ENCODE measurements at regions of chr17 and their contacts with region 1.

Region 1: DNA sequence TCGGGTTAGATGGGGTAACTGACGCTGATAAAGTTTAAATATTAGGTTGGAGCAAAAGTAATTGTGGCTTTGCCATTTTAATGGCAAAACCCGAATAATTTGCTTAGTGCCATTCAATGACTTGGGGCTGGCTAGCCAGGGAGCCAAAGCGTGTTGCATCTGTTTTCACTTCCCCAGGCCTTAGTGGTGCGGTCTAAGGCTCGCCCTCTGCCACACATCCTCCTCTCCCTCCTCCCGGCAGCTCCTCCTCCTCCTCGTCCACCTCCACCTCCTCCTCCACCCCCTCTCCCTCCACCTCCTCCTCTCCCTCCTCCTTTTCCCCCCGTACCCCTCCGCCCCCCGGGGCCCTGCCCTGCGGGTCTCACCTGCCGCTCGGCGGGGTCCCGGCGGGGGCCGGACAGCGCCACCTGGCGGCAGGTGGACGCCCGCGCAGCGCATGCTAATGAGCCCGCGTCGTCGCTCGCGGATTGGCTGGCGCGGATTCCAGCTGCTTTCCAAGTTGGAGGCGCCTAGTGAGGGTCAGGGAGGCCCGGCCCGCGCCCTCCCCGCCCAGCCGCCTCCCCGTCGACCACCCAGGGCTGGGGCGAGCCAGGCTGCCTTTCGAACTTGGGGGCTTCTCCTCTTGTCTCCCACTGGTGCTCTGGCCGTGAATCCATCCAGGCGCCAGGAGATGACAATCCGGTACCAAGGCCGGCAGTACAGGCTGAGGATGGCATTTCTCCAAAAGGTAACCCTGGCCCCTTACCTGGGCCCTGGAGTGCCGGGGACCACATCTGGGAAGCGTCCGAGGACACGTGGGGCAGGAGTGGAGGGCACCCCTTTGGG is 36.6 kb upstream of the RGS9 start:
- DNase-seq: peak; percentile 67 to 92 (median 77)
- ATAC-seq: peak; percentile 87
- H3K4me3 ChIP-seq: peak overlapping the region; percentile 68
- H3K4me3 Mint-ChIP-seq: peak overlapping the region; percentile 88
- H3K27ac ChIP-seq: peak overlapping the region in 1 of 2 donors; percentile 56
- H3K27ac Mint-ChIP-seq: peak overlapping the region; percentile 89
- H3K4me1 ChIP-seq: peaks cover 19% of the 10 kb centered on the region
- H3K4me1 Mint-ChIP-seq: peaks cover 26% of the 10 kb centered on the region
- H3K27me3 ChIP-seq: no peaks in the 10 kb centered on the region
- H3K27me3 Mint-ChIP-seq: no peaks in the 10 kb centered on the region
- CTCF ChIP-seq: peak; percentile 76

Region 2: DNA sequence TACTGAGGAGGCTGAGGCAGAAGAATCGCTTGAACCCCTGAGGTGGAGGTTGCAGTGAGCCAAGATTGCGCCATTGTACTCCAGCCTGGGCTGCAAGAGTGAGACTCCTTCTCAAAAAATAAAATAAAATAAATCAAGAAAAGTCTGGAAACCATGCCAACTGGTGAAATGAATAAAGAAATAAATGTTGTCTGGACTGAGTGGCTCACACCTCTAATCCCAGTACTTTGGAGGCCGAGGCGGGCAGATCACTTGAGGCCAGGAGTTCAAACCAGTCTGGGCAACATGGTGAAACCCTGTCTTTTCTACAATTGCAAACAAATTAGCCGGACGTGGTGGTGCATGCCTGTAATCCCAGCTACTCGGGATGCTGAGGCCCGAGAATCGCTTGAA is 180.5 kb before region 1 on chr17:
- CTCF ChIA-PET with region 1: interaction called, 10 read pairs
- POLR2A ChIA-PET with region 1: interaction called, 7 read pairs
- intact Hi-C with region 1: loop called in 1 of 2 experiments (anchors 2 kb)
- DNase-seq: peak in 2 of 14 experiments; percentile 14 to 39
- ATAC-seq: no peak
- H3K4me3 ChIP-seq: peak overlapping the region; percentile 60
- H3K4me3 Mint-ChIP-seq: peak overlapping the region; percentile 91
- H3K27ac ChIP-seq: peak overlapping the region in 1 of 2 donors; percentile 65
- H3K27ac Mint-ChIP-seq: peak overlapping the region; percentile 83
- H3K4me1 ChIP-seq: peaks cover 13% of the 10 kb centered on the region
- H3K4me1 Mint-ChIP-seq: no peaks in the 10 kb centered on the region
- H3K27me3 ChIP-seq: no peaks in the 10 kb centered on the region
- H3K27me3 Mint-ChIP-seq: no peaks in the 10 kb centered on the region
- CTCF ChIP-seq: no peak

Region 3: DNA sequence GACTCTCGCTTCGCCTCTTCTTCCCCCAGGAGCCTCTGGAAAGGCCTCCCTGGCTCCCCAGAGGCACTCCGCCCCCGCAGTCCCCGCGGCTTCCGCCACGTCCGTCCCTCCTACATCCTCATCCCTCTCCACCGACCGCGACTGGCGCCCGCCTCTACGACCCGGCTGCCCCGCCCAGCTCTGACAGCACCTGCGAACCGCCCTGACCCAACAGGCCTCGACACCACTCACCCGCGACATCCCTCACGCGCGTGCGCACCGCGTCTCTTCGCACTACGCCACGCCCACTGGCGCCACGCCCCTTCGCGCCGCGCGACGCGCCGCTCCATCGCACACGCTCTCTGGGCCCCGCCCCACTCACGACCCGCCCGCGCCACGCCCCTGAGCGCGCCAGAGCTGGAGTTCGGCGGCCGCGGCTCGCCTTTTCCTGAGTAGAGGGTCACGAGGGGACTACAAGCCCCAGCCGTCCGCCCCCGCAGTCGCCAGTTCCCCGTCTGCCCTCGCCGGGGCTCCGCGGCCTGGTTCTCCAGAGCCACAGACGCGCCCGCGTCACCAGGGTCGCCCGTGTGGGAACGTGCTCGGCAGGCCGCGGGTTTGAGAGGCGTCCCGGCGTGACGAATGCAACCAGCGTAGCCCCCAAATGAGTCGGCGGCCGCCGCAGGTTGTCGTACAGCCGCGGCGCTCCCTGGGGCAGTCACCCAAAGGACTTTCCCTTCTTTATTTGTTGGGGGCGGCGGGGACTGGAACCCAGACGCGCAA is 125.0 kb before region 1 on chr17:
- CTCF ChIA-PET with region 1: interaction called, 18 read pairs
- POLR2A ChIA-PET with region 1: interaction called, 16 read pairs
- intact Hi-C with region 1: no loop called
- DNase-seq: peak; percentile 93 to 100 (median 97)
- ATAC-seq: peak; percentile 77
- H3K4me3 ChIP-seq: peak overlapping the region; percentile 84
- H3K4me3 Mint-ChIP-seq: peak overlapping the region; percentile 93
- H3K27ac ChIP-seq: peak overlapping the region; percentile 98 to 99
- H3K27ac Mint-ChIP-seq: peak overlapping the region; percentile 99
- H3K4me1 ChIP-seq: peaks cover 37% of the 10 kb centered on the region
- H3K4me1 Mint-ChIP-seq: peaks cover 45% of the 10 kb centered on the region
- H3K27me3 ChIP-seq: no peaks in the 10 kb centered on the region
- H3K27me3 Mint-ChIP-seq: no peaks in the 10 kb centered on the region
- CTCF ChIP-seq: no peak

Region 4: DNA sequence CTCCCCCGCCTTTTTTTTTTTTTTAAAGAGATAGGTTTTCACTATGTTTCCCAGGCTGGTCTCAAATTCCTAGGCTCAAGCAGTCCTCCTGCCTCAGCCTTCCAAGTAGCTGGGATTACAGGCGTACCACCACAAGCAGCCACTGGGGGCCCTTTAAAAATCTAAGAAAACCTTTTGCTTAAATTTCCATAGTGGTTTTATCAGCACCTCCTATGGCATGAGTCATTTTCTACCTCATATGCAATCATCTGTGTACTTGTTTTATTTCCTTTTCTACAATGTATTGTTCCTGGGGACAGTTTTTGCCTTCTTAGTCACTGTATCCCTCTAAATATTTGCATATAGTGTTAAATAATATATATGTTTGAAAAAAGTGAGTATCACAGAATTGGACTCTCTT is 73.2 kb before region 1 on chr17:
- CTCF ChIA-PET with region 1: interaction called, 8 read pairs
- POLR2A ChIA-PET with region 1: no interaction called
- intact Hi-C with region 1: loop called in 1 of 2 experiments (anchors 1 kb)
- DNase-seq: peak in 11 of 14 experiments; percentile 21 to 82 (median 42)
- ATAC-seq: peak; percentile 77
- H3K4me3 ChIP-seq: no peak overlapping the region
- H3K4me3 Mint-ChIP-seq: peak overlapping the region; percentile 81
- H3K27ac ChIP-seq: no peak overlapping the region
- H3K27ac Mint-ChIP-seq: peak overlapping the region; percentile 61
- H3K4me1 ChIP-seq: peaks cover 48% of the 10 kb centered on the region
- H3K4me1 Mint-ChIP-seq: peaks cover 94% of the 10 kb centered on the region
- H3K27me3 ChIP-seq: no peaks in the 10 kb centered on the region
- H3K27me3 Mint-ChIP-seq: no peaks in the 10 kb centered on the region
- CTCF ChIP-seq: peak; percentile 29

Region 5: DNA sequence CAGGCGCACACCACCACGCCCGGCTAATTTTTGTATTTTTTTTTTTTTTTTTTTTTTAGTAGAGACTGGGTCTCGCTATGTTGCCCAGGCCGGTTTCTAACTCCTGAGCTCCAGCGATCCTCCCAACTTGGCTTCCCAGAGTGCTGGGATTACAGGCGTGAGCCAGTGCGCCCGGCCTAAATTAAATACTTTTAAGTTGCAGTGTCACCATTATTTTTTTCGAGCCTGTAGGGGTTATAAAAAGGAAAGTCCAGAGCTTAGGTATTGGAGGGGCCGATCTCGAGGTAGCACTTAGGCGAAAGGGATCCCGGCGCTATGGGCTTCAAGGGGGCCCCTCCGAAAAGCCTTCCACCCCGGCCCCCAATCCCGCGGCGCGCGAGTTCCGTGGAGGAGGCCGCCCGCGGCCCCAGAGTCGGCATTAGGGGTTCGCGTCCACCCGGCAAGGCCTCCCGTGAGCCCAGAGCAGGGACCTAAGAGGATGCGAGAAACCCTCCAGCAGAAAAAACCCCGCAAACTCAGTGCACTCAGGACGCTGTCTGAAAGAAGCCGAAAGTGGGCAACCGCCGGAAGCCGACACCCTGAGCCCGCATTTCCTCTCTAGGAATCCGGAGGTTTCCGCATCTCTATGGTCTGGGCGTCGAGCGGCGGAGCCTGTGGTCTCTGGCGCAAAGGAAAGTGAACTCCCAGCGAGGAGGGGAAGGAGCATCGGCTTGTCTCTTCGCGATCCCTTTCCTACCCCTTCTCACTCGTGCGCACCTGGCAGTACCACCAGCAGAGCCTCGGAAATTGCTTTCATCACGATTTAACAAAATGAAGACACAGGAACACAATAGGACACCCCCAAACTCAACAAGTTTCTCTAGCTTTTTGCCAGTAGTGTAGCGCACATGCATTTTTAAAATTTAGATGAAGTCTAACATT is 22.6 kb after region 1 on chr17:
- CTCF ChIA-PET with region 1: interaction called, 16 read pairs
- POLR2A ChIA-PET with region 1: interaction called, 8 read pairs
- intact Hi-C with region 1: loop called in 1 of 2 experiments (anchors 2 kb)
- DNase-seq: peak; percentile 72 to 93 (median 77)
- ATAC-seq: peak; percentile 95
- H3K4me3 ChIP-seq: peak overlapping the region; percentile 81
- H3K4me3 Mint-ChIP-seq: peak overlapping the region; percentile 88
- H3K27ac ChIP-seq: peak overlapping the region; percentile 52 to 87
- H3K27ac Mint-ChIP-seq: peak overlapping the region; percentile 87
- H3K4me1 ChIP-seq: peaks cover 15% of the 10 kb centered on the region
- H3K4me1 Mint-ChIP-seq: peaks cover 14% of the 10 kb centered on the region
- H3K27me3 ChIP-seq: no peaks in the 10 kb centered on the region
- H3K27me3 Mint-ChIP-seq: peaks cover 10% of the 10 kb centered on the region
- CTCF ChIP-seq: no peak

Region 6: GRCh38 chr17:65181237-65182061 is 80.9 kb after region 1 on chr17:
- CTCF ChIA-PET with region 1: no interaction called
- POLR2A ChIA-PET with region 1: no interaction called
- intact Hi-C with region 1: no loop called
- DNase-seq: peak in 3 of 14 experiments; percentile 15 to 40 (median 20)
- ATAC-seq: no peak
- H3K4me3 ChIP-seq: no peak overlapping the region
- H3K4me3 Mint-ChIP-seq: peak overlapping the region; percentile 1
- H3K27ac ChIP-seq: no peak overlapping the region
- H3K27ac Mint-ChIP-seq: peak overlapping the region; percentile 75
- H3K4me1 ChIP-seq: peaks cover 42% of the 10 kb centered on the region
- H3K4me1 Mint-ChIP-seq: peaks cover 48% of the 10 kb centered on the region
- H3K27me3 ChIP-seq: no peaks in the 10 kb centered on the region
- H3K27me3 Mint-ChIP-seq: no peaks in the 10 kb centered on the region
- CTCF ChIP-seq: no peak

Measured in CD4-positive, alpha-beta T cell (primary cell).